SK-N-SH (cell line): ENCODE measurements at regions of chr1 and their contacts with region 1.

Region 1: GRCh38 chr1:3611170-3612019 is at the start of gene MEGF6:
- DNase-seq: peak; percentile 99
- H3K4me3 ChIP-seq: peak within 1 kb of the TSS; percentile 26 to 54; a peak in 2 of 4 replicates
- H3K27ac ChIP-seq: no peak within 1 kb of the TSS
- H3K4me1 ChIP-seq: peaks cover 0 to 38% of the 10 kb centered on the region in 2 experiments; a peak in 2 of 4 replicates
- H3K27me3 ChIP-seq: no peaks in the 10 kb centered on the region
- CTCF ChIP-seq: no peak
- EP300 ChIP-seq: no peak
- RAD21 ChIP-seq: no peak
- polyA plus RNA-seq, gene MEGF6: 5.8 and 7.6 TPM in 2 replicates

Region 2: GRCh38 chr1:3598051-3598491 is 13.3 kb before region 1 on chr1:
- CTCF ChIA-PET with region 1: interaction called, 17 read pairs
- POLR2A ChIA-PET with region 1: no interaction called
- DNase-seq: no peak
- H3K4me3 ChIP-seq: no peak overlapping the region
- H3K27ac ChIP-seq: no peak overlapping the region; a peak in 1 of 4 replicates
- H3K4me1 ChIP-seq: peaks cover 0 to 23% of the 10 kb centered on the region in 2 experiments; a peak in 1 of 4 replicates
- H3K27me3 ChIP-seq: no peaks in the 10 kb centered on the region
- CTCF ChIP-seq: no peak
- EP300 ChIP-seq: no peak
- RAD21 ChIP-seq: no peak